Mucosa of descending colon (tissue), 3 donors: ENCODE measurements at regions of chr5 and their contacts with region 1.

Region 1: DNA sequence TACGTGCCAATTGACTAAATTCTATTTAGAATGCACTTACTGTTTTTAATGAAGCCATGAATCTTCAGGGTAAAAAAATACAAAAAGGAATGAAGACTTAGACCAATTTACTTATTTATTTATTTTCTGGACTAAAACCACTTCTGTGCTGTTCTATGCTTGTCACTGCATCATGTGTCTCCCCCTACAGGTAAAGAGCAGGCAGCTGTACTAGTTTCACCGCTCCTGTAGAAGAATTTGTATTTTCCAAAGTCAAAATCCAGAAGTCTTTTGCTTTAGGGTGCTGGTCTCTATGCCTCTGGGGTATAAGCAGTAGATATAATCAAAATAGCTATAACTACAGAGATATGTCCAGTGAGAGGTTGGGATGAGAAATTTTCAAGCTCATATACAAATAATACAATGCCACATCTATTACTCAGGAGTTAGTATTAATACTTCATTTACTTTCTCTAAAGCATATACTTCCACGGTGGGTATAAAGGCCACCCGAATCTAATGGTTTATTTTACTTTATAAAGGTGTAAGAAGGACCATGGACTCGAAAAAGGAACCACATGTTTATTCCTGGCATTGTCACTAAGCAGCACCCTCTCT is 591.5 kb downstream of the RAB3C start:
- DNase-seq: peak in 1 of 3 donors; percentile 38
- ATAC-seq: peak; percentile 76
- H3K4me3 ChIP-seq: no peak overlapping the region
- H3K4me1 ChIP-seq: no peaks in the 10 kb centered on the region
- CTCF ChIP-seq: peak; percentile 76

Region 2: GRCh38 chr5:58891096-58891970 is 283.0 kb before region 1 on chr5:
- intact Hi-C with region 1: loop called (anchors 5 to 10 kb)
- DNase-seq: peak in 2 of 3 donors; percentile 68 to 85
- ATAC-seq: peak; percentile 75
- H3K4me3 ChIP-seq: no peak overlapping the region
- H3K4me1 ChIP-seq: peaks cover 6% of the 10 kb centered on the region
- CTCF ChIP-seq: no peak

Region 3: GRCh38 chr5:59020611-59021285 is 153.6 kb before region 1 on chr5:
- intact Hi-C with region 1: no loop called
- DNase-seq: no peak
- ATAC-seq: peak; percentile 95
- H3K4me3 ChIP-seq: no peak overlapping the region
- H3K4me1 ChIP-seq: peaks cover 20% of the 10 kb centered on the region
- CTCF ChIP-seq: no peak